ENCODE measurements at regions of chr2 and their contacts with region 1.

Region 1: GRCh38 chr2:10434886-10435819 is 13.0 kb downstream of the ODC1 start:
- DNase-seq: peak; percentile 51 to 86 (median 74)
- ATAC-seq: peak; percentile 74
- H3K4me3 ChIP-seq: no peak overlapping the region
- H3K4me3 Mint-ChIP-seq: no peak overlapping the region
- H3K27ac ChIP-seq: no peak overlapping the region
- H3K27ac Mint-ChIP-seq: no peak overlapping the region
- H3K4me1 ChIP-seq: peaks cover 14% of the 10 kb centered on the region
- H3K4me1 Mint-ChIP-seq: peaks cover 16% of the 10 kb centered on the region
- H3K27me3 ChIP-seq: peaks cover 0 to 4% of the 10 kb centered on the region in 2 experiments
- H3K27me3 Mint-ChIP-seq: peaks cover 2% of the 10 kb centered on the region
- CTCF ChIP-seq: peak; percentile 93

Region 2: GRCh38 chr2:9142551-9143263 is 1292.4 kb before region 1 on chr2:
- CTCF ChIA-PET with region 1: no interaction called
- POLR2A ChIA-PET with region 1: no interaction called
- intact Hi-C with region 1: loop called in 1 of 2 experiments (anchors 5 kb)
- DNase-seq: peak; percentile 57 to 88 (median 75)
- ATAC-seq: peak; percentile 95
- H3K4me3 ChIP-seq: peak overlapping the region in 1 of 2 experiments; percentile 8
- H3K4me3 Mint-ChIP-seq: peak overlapping the region; percentile 39
- H3K27ac ChIP-seq: no peak overlapping the region
- H3K27ac Mint-ChIP-seq: no peak overlapping the region
- H3K4me1 ChIP-seq: peaks cover 3% of the 10 kb centered on the region
- H3K4me1 Mint-ChIP-seq: peaks cover 6% of the 10 kb centered on the region
- H3K27me3 ChIP-seq: no peaks in the 10 kb centered on the region
- H3K27me3 Mint-ChIP-seq: peaks cover 21% of the 10 kb centered on the region
- CTCF ChIP-seq: peak; percentile 90

Region 3: DNA sequence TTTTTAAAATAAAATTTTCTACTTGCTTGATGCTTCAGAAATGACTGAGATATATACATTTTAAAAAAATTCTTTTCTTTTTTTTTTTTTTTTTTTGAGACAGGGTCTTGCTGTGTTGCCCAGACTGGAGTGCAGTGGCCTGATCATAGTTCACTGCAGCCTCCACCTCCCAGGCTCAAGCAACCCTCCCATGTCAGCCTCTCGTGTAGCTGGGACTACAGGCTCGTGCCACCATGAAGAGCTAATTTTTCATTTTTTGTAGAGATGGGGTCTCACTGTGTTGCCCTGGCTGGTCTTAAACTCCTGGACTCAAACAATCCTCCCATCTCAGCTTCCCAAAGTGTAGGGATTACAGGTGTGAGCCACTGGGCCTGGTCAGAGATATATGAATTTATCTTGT is 367.8 kb before region 1 on chr2:
- CTCF ChIA-PET with region 1: interaction called, 168 read pairs
- POLR2A ChIA-PET with region 1: interaction called, 7 read pairs
- intact Hi-C with region 1: loop called (anchors 1 kb)
- DNase-seq: no peak
- ATAC-seq: no peak
- H3K4me3 ChIP-seq: no peak overlapping the region
- H3K4me3 Mint-ChIP-seq: no peak overlapping the region
- H3K27ac ChIP-seq: no peak overlapping the region
- H3K27ac Mint-ChIP-seq: no peak overlapping the region
- H3K4me1 ChIP-seq: no peaks in the 10 kb centered on the region
- H3K4me1 Mint-ChIP-seq: no peaks in the 10 kb centered on the region
- H3K27me3 ChIP-seq: no peaks in the 10 kb centered on the region
- H3K27me3 Mint-ChIP-seq: no peaks in the 10 kb centered on the region
- CTCF ChIP-seq: no peak

Region 4: DNA sequence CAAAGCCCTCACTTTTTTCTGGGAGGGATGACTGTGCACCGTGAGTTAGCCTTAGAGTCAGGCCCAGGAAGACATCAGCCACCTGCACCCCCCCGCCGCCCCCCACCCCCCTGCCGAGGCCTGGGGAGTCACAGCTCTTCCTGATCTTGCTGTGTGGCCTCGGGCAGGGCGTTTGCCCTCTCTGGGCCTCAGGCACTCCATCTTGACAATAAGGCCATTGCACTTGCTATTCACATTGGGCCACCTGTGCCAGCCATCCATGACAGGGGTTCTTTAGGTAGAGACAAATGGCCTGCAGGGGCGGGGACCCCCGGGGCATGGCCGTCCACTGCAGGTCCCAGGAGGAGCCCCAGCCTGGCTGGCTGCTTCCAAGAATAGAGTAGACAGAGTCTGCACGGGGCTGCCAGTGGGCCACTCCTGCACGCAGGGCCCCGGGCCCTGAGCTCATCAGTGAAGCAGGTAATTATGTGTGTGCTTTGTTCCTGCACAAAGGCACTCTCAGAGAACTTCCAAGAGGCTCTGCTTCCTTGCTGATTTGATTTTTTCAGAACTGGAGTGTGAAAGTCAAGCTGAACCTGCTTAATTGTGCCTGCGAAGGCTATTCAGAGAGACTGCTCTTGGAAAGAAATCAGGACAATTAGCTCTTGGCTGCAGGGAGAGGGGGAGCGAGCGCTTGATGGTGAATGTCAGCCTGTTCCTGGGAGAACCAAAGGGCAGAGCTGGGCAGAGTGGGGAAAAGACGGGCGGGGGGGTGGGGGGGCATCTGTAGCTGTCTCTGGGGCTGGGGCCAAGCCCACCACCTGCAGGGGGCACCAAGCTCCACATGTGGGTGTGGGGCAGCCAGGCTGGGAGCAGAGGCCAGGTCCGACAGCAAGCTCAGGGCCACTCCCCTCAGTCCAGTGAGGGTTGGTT is 272.3 kb before region 1 on chr2:
- CTCF ChIA-PET with region 1: interaction called, 7 read pairs
- POLR2A ChIA-PET with region 1: no interaction called
- intact Hi-C with region 1: loop called in 1 of 2 experiments (anchors 1 kb)
- DNase-seq: peak in 3 of 9 experiments; percentile 23 to 30 (median 29)
- ATAC-seq: no peak
- H3K4me3 ChIP-seq: no peak overlapping the region
- H3K4me3 Mint-ChIP-seq: no peak overlapping the region
- H3K27ac ChIP-seq: no peak overlapping the region
- H3K27ac Mint-ChIP-seq: no peak overlapping the region
- H3K4me1 ChIP-seq: no peaks in the 10 kb centered on the region
- H3K4me1 Mint-ChIP-seq: peaks cover 2% of the 10 kb centered on the region
- H3K27me3 ChIP-seq: no peaks in the 10 kb centered on the region
- H3K27me3 Mint-ChIP-seq: no peaks in the 10 kb centered on the region
- CTCF ChIP-seq: no peak

Region 5: DNA sequence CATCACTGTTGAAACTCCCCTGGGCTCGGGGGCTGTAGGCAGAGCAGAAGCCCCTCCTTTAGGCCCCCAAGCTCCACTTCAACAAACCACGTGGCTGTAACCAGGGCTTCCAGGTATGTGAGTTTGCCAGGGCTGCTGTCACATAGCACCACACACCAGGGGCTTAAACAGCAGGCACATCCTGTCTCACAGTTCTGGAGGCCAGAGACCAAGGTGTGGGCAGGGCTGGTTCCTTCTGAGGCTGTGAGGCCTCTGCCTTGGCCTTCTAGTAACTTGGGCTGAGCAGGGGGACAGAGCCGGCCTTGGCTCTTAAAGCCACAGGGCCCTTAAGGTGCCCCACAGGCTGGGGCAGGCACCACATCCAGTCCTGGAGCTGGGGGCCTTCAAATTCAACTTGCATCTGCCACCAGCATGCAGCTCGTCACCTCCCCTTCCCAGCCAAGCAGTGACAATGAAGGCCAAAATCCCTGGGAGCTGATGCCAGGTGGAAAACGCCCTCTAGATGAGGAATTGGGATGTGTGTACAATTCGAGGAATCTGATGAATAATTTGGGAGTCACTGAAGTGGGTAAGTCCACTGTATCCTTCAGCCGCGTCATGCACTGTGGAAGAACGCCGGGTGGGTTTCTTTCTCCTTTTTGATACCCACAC is 117.2 kb after region 1 on chr2:
- CTCF ChIA-PET with region 1: no interaction called
- POLR2A ChIA-PET with region 1: no interaction called
- intact Hi-C with region 1: no loop called
- DNase-seq: no peak
- ATAC-seq: no peak
- H3K4me3 ChIP-seq: no peak overlapping the region
- H3K4me3 Mint-ChIP-seq: no peak overlapping the region
- H3K27ac ChIP-seq: no peak overlapping the region
- H3K27ac Mint-ChIP-seq: no peak overlapping the region
- H3K4me1 ChIP-seq: peaks cover 7% of the 10 kb centered on the region
- H3K4me1 Mint-ChIP-seq: peaks cover 11% of the 10 kb centered on the region
- H3K27me3 ChIP-seq: no peaks in the 10 kb centered on the region
- H3K27me3 Mint-ChIP-seq: peaks cover 18% of the 10 kb centered on the region
- CTCF ChIP-seq: no peak

Region 6: GRCh38 chr2:10566018-10566417 is 130.9 kb after region 1 on chr2:
- CTCF ChIA-PET with region 1: no interaction called
- POLR2A ChIA-PET with region 1: no interaction called
- intact Hi-C with region 1: no loop called
- DNase-seq: no peak
- ATAC-seq: no peak
- H3K4me3 ChIP-seq: no peak overlapping the region
- H3K4me3 Mint-ChIP-seq: no peak overlapping the region
- H3K27ac ChIP-seq: no peak overlapping the region
- H3K27ac Mint-ChIP-seq: no peak overlapping the region
- H3K4me1 ChIP-seq: no peaks in the 10 kb centered on the region
- H3K4me1 Mint-ChIP-seq: no peaks in the 10 kb centered on the region
- H3K27me3 ChIP-seq: no peaks in the 10 kb centered on the region
- H3K27me3 Mint-ChIP-seq: no peaks in the 10 kb centered on the region
- CTCF ChIP-seq: no peak

Region 7: GRCh38 chr2:10668402-10669012 is 233.4 kb after region 1 on chr2:
- CTCF ChIA-PET with region 1: interaction called, 7 read pairs
- POLR2A ChIA-PET with region 1: interaction called, 4 read pairs
- intact Hi-C with region 1: loop called in 1 of 2 experiments (anchors 1 kb)
- DNase-seq: peak in 3 of 9 experiments; percentile 39 to 78 (median 74)
- ATAC-seq: peak; percentile 77
- H3K4me3 ChIP-seq: no peak overlapping the region
- H3K4me3 Mint-ChIP-seq: no peak overlapping the region
- H3K27ac ChIP-seq: no peak overlapping the region
- H3K27ac Mint-ChIP-seq: no peak overlapping the region
- H3K4me1 ChIP-seq: no peaks in the 10 kb centered on the region
- H3K4me1 Mint-ChIP-seq: peaks cover 2% of the 10 kb centered on the region
- H3K27me3 ChIP-seq: no peaks in the 10 kb centered on the region
- H3K27me3 Mint-ChIP-seq: no peaks in the 10 kb centered on the region
- CTCF ChIP-seq: peak; percentile 86